GM12878 (cell line): ENCODE measurements at regions of chr7 and their contacts with region 1.

Region 1: GRCh38 chr7:97027427-97028234 is 3.0 kb upstream of the DLX5 start:
- DNase-seq: peak; percentile 13
- ATAC-seq: peak; percentile 99
- H3K4me3 ChIP-seq: no peak overlapping the region
- H3K27ac ChIP-seq: no peak overlapping the region
- H3K4me1 ChIP-seq: no peaks in the 10 kb centered on the region
- H3K27me3 ChIP-seq: peaks cover 15 to 25% of the 10 kb centered on the region in 2 experiments
- CTCF ChIP-seq: peak; percentile 87 to 94 (median 89)
- EP300 ChIP-seq: no peak
- POLR2A ChIP-seq: no peak
- RAD21 ChIP-seq: peak; percentile 93

Region 2: DNA sequence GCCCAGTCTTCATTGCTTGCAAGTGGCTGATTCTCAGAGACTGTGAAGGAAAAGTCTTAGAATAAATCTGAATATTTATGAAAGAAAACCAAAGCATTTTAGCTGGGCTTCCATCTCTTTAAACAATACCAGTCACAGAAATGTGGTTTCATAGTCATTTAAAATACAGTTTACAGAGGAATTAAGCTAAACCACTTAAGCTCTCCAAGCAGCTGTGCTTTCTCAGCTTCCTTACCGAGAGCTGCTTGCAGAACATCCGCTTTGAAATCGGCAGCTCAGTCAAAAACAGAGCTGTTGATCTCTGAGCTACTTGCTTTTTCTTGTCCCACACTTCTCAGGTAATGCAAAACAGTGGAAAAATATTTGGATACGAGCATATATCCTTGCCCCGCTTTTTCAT is 1120.8 kb before region 1 on chr7:
- CTCF ChIA-PET with region 1: interaction called, 3 read pairs
- POLR2A ChIA-PET with region 1: no interaction called
- RAD21 ChIA-PET with region 1: no interaction called
- SMC1A ChIA-PET with region 1: no interaction called
- in situ Hi-C with region 1: loop called (anchors 5 kb)
- intact Hi-C with region 1: no loop called
- DNase-seq: no peak
- ATAC-seq: no peak
- H3K4me3 ChIP-seq: no peak overlapping the region
- H3K27ac ChIP-seq: no peak overlapping the region
- H3K4me1 ChIP-seq: no peaks in the 10 kb centered on the region
- H3K27me3 ChIP-seq: no peaks in the 10 kb centered on the region
- CTCF ChIP-seq: no peak
- EP300 ChIP-seq: no peak
- POLR2A ChIP-seq: no peak
- RAD21 ChIP-seq: no peak

Region 3: GRCh38 chr7:96075510-96076349 is 951.9 kb before region 1 on chr7:
- CTCF ChIA-PET with region 1: interaction called, 31 read pairs
- POLR2A ChIA-PET with region 1: no interaction called
- RAD21 ChIA-PET with region 1: interaction called, 12 read pairs
- SMC1A ChIA-PET with region 1: interaction called, 7 read pairs
- in situ Hi-C with region 1: loop called (anchors 5 kb)
- intact Hi-C with region 1: loop called (anchors 1 kb)
- DNase-seq: no peak
- ATAC-seq: peak; percentile 96
- H3K4me3 ChIP-seq: peak overlapping the region; percentile 7; the same call in 1 of the 2 replicates
- H3K27ac ChIP-seq: no peak overlapping the region
- H3K4me1 ChIP-seq: no peaks in the 10 kb centered on the region
- H3K27me3 ChIP-seq: peaks cover 3 to 11% of the 10 kb centered on the region in 2 experiments; a peak in 3 of 4 replicates
- CTCF ChIP-seq: peak; percentile 74 to 80 (median 77)
- EP300 ChIP-seq: no peak
- POLR2A ChIP-seq: no peak
- RAD21 ChIP-seq: peak; percentile 81

Region 4: DNA sequence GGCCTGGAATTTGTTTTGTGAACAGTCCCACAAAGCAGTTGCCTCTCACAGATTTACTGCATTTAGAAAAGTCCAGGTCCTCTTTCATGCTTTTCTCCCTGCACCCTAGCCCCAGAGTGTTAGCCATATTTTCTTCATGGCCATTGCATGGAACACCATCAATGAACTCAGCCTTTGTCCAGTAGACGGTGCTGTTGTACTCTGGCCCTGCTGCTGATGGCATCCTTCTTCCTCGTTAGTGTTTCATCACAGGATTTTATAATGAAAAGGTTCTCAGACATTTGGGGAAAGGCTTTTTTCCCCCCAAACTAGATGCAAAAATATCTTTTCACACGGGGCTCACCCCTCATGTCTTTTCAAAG is 612.7 kb before region 1 on chr7:
- CTCF ChIA-PET with region 1: interaction called, 7 read pairs
- POLR2A ChIA-PET with region 1: no interaction called
- RAD21 ChIA-PET with region 1: interaction called, 6 read pairs
- SMC1A ChIA-PET with region 1: interaction called, 7 read pairs
- in situ Hi-C with region 1: loop called (anchors 10 kb)
- intact Hi-C with region 1: loop called (anchors 1 kb)
- DNase-seq: peak; percentile 7
- ATAC-seq: peak; percentile 93
- H3K4me3 ChIP-seq: no peak overlapping the region
- H3K27ac ChIP-seq: no peak overlapping the region
- H3K4me1 ChIP-seq: no peaks in the 10 kb centered on the region
- H3K27me3 ChIP-seq: no peaks in the 10 kb centered on the region; a peak in 1 of 4 replicates
- CTCF ChIP-seq: peak; percentile 71 to 88 (median 84)
- EP300 ChIP-seq: no peak
- POLR2A ChIP-seq: no peak
- RAD21 ChIP-seq: peak; percentile 88

Region 5: DNA sequence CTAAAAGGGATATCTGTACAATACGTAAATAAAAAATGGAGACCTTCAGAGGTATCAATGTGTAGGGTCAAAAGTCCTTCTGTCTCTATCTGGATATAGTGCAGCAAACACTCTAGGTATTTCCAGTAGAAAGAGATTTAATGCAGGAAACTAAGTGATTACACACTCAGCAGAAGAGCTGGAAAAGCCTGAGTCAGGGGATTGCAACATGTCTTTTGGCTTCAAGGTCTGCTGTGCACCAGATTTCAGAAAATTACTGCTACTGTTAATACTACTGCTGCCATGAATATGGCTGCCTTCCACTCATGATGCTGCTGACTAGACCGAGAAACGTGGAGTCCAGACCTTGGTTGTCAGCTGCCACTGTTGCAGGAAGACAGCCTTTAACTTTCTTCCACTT is 117.1 kb before region 1 on chr7:
- CTCF ChIA-PET with region 1: no interaction called
- POLR2A ChIA-PET with region 1: no interaction called
- RAD21 ChIA-PET with region 1: no interaction called
- SMC1A ChIA-PET with region 1: no interaction called
- in situ Hi-C with region 1: no loop called
- intact Hi-C with region 1: no loop called
- DNase-seq: no peak
- ATAC-seq: no peak
- H3K4me3 ChIP-seq: no peak overlapping the region
- H3K27ac ChIP-seq: no peak overlapping the region
- H3K4me1 ChIP-seq: no peaks in the 10 kb centered on the region
- H3K27me3 ChIP-seq: no peaks in the 10 kb centered on the region
- CTCF ChIP-seq: no peak
- EP300 ChIP-seq: no peak
- POLR2A ChIP-seq: no peak
- RAD21 ChIP-seq: no peak

Region 6: DNA sequence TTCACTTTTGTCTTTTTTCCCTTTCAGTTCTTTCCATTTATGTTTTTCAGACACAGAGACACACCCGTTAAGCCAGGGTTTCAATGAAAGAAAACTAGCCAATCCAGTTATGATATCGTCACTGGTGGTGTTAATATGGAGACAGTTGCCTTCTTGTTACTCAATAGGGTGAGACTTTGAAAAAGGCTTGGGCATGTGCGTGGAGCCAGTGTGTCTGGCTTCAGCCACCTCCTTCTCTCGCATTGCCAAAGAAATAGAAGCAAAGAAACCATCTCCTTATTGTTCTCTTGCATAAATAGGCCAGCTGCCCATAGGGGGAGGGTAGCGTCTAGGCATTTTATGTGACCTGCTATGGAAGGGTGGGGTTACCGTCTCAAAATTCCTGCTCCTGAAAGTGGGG is 106.4 kb before region 1 on chr7:
- CTCF ChIA-PET with region 1: no interaction called
- POLR2A ChIA-PET with region 1: no interaction called
- RAD21 ChIA-PET with region 1: no interaction called
- SMC1A ChIA-PET with region 1: no interaction called
- in situ Hi-C with region 1: no loop called
- intact Hi-C with region 1: no loop called
- DNase-seq: no peak
- ATAC-seq: no peak
- H3K4me3 ChIP-seq: no peak overlapping the region
- H3K27ac ChIP-seq: no peak overlapping the region
- H3K4me1 ChIP-seq: no peaks in the 10 kb centered on the region
- H3K27me3 ChIP-seq: no peaks in the 10 kb centered on the region
- CTCF ChIP-seq: no peak
- EP300 ChIP-seq: no peak
- POLR2A ChIP-seq: no peak
- RAD21 ChIP-seq: no peak

Region 7: DNA sequence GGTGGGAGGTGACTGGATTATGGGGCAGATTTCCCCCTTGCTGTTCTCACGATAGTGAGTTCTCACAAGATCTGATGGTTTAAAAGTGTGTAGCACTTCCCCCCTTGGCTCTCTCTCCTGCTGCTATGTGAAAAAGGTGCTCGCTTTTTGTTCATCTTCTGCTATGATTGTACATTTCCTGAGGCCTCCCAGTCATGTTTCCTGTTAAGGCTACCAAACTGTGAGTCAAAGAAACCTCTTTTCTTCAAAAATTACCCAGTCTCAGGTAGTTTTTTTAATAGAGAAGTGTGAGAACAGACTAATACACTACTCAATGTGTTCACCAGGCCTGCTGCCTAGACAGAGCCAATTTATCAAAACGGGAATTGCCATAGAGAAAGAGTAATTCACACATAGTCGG is 139.5 kb after region 1 on chr7:
- CTCF ChIA-PET with region 1: no interaction called
- POLR2A ChIA-PET with region 1: no interaction called
- RAD21 ChIA-PET with region 1: no interaction called
- SMC1A ChIA-PET with region 1: no interaction called
- in situ Hi-C with region 1: no loop called
- intact Hi-C with region 1: no loop called
- DNase-seq: no peak
- ATAC-seq: no peak
- H3K4me3 ChIP-seq: no peak overlapping the region
- H3K27ac ChIP-seq: no peak overlapping the region
- H3K4me1 ChIP-seq: no peaks in the 10 kb centered on the region
- H3K27me3 ChIP-seq: no peaks in the 10 kb centered on the region
- CTCF ChIP-seq: no peak
- EP300 ChIP-seq: no peak
- POLR2A ChIP-seq: no peak
- RAD21 ChIP-seq: no peak